Panc1 (cell line): ENCODE measurements at regions of chr3 and their contacts with region 1.

Region 1: GRCh38 chr3:139427283-139427993 is 38.0 kb upstream of the COPB2 start:
- DNase-seq: peak; percentile 54
- ATAC-seq: peak; percentile 94
- H3K4me3 ChIP-seq: no peak overlapping the region
- H3K27ac ChIP-seq: no peak overlapping the region
- H3K4me1 ChIP-seq: no peaks in the 10 kb centered on the region
- H3K27me3 ChIP-seq: no peaks in the 10 kb centered on the region
- CTCF ChIP-seq: peak; percentile 87

Region 2: DNA sequence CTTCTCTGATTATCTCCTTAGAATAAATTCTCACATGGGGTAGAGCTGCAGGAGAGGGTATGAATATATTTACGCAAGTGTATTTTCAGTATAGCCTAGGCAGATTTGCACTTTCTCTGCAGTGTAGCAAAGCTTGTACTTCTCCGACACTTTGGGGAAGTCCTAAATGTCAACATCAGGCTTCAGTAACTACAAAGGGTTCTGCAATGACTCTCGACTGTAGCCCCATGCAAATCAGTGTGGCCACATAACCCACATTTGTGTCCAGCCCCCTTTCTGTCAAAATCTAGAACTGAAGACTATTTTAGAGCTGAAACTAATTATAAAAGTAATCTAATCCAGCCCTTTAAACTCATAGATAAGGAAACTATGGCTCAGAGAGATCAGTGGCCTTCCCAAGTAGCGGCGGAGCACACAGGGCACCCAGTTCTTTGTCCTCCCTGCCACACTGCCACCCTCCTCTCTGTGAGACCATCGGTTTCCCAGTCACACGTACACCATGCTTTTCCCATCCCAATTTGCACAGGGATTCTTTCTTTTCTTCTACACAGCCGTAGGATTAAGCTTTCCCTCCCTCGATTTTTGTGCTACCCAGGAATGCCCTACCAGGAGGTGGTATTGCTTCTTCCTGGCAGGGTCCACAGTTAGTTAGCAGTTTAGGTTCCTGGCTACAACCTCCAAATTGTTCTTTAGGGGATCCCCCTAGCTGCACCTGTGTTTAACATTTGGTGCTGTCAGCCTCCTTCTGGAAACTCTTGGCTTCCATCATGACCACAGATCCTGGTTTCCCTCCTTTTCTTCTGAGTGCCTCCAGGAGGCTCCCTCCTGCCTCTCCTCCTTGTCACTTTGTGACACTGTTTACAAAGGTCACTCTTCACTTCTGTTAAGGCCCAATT is 1056.1 kb before region 1 on chr3:
- CTCF ChIA-PET with region 1: no interaction called
- POLR2A ChIA-PET with region 1: no interaction called
- in situ Hi-C with region 1: no loop called
- intact Hi-C with region 1: no loop called
- DNase-seq: no peak
- ATAC-seq: 0 out of 2 replicates have a peak, but pooled peaks have one; percentile 24
- H3K4me3 ChIP-seq: no peak overlapping the region
- H3K27ac ChIP-seq: no peak overlapping the region
- H3K4me1 ChIP-seq: no peaks in the 10 kb centered on the region
- H3K27me3 ChIP-seq: no peaks in the 10 kb centered on the region; the same call in 1 of the 2 replicates
- CTCF ChIP-seq: no peak

Region 3: GRCh38 chr3:139182143-139182542 is 245.3 kb before region 1 on chr3:
- CTCF ChIA-PET with region 1: no interaction called
- POLR2A ChIA-PET with region 1: no interaction called
- in situ Hi-C with region 1: no loop called
- intact Hi-C with region 1: no loop called
- DNase-seq: no peak
- ATAC-seq: no peak
- H3K4me3 ChIP-seq: no peak overlapping the region
- H3K27ac ChIP-seq: no peak overlapping the region
- H3K4me1 ChIP-seq: no peaks in the 10 kb centered on the region; the same call in 1 of the 2 replicates
- H3K27me3 ChIP-seq: no peaks in the 10 kb centered on the region
- CTCF ChIP-seq: no peak

Region 4: GRCh38 chr3:139218046-139218445 is 209.4 kb before region 1 on chr3:
- CTCF ChIA-PET with region 1: no interaction called
- POLR2A ChIA-PET with region 1: no interaction called
- in situ Hi-C with region 1: no loop called
- intact Hi-C with region 1: no loop called
- DNase-seq: no peak
- ATAC-seq: no peak
- H3K4me3 ChIP-seq: no peak overlapping the region
- H3K27ac ChIP-seq: no peak overlapping the region
- H3K4me1 ChIP-seq: no peaks in the 10 kb centered on the region
- H3K27me3 ChIP-seq: no peaks in the 10 kb centered on the region
- CTCF ChIP-seq: no peak

Region 5: DNA sequence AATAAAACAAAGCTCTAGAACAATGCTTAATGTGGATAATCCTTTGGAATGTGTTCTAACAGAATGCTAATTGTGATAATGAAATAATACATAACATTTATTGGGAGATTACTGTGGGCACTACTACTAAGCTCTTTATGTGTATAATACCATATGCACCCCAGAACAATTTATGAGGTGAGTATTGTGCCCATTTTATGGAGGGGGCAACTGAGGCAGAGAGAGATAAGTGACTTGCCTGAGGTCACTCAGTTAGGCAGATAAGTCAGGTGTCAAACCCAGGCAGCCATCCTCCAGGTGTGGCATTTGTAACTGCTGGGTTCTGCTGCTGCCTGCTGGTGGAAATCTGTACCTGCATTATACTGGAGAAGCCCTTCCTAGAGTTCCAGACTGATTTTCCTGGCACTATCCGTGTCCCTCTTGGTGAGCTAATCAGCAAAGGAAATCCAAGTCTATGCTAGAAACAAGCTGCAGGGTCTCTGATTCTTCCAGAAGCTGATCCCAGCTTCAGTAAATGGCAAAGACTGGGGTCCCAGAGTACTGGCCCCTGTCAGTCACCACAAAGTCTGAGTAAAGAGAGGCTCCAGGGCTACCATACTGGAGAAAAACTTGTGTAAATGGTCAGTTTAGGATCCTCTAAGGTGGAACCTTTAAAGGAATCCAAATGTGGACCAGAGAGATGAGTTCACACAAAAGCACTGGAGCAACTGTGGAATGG is 134.7 kb after region 1 on chr3:
- CTCF ChIA-PET with region 1: interaction called, 13 read pairs
- POLR2A ChIA-PET with region 1: no interaction called
- in situ Hi-C with region 1: no loop called
- intact Hi-C with region 1: loop called (anchors 1 kb)
- DNase-seq: peak; percentile 8
- ATAC-seq: peak; percentile 92
- H3K4me3 ChIP-seq: no peak overlapping the region
- H3K27ac ChIP-seq: no peak overlapping the region
- H3K4me1 ChIP-seq: peaks cover 3% of the 10 kb centered on the region
- H3K27me3 ChIP-seq: no peaks in the 10 kb centered on the region
- CTCF ChIP-seq: peak; percentile 90

Region 6: GRCh38 chr3:139715743-139716360 is 288.4 kb after region 1 on chr3:
- CTCF ChIA-PET with region 1: interaction called, 13 read pairs
- POLR2A ChIA-PET with region 1: no interaction called
- in situ Hi-C with region 1: no loop called
- intact Hi-C with region 1: no loop called
- DNase-seq: no peak
- ATAC-seq: no peak
- H3K4me3 ChIP-seq: no peak overlapping the region
- H3K27ac ChIP-seq: no peak overlapping the region
- H3K4me1 ChIP-seq: no peaks in the 10 kb centered on the region
- H3K27me3 ChIP-seq: peaks cover 5% of the 10 kb centered on the region; the same call in 1 of the 2 replicates
- CTCF ChIP-seq: no peak

Region 7: GRCh38 chr3:139935016-139935865 is 507.8 kb after region 1 on chr3 and contains the start of gene CLSTN2:
- CTCF ChIA-PET with region 1: interaction called, 4 read pairs
- POLR2A ChIA-PET with region 1: no interaction called
- in situ Hi-C with region 1: no loop called
- intact Hi-C with region 1: loop called (anchors 10 kb)
- DNase-seq: no peak
- ATAC-seq: peak; percentile 80
- H3K4me3 ChIP-seq: peak within 1 kb of the TSS; percentile 19 to 29
- H3K27ac ChIP-seq: no peak within 1 kb of the TSS
- H3K4me1 ChIP-seq: peaks cover 6% of the 10 kb centered on the region; the same call in 1 of the 2 replicates
- H3K27me3 ChIP-seq: peaks cover 26% of the 10 kb centered on the region
- CTCF ChIP-seq: no peak
- total RNA-seq, gene CLSTN2: 0.03 TPM

Region 8: DNA sequence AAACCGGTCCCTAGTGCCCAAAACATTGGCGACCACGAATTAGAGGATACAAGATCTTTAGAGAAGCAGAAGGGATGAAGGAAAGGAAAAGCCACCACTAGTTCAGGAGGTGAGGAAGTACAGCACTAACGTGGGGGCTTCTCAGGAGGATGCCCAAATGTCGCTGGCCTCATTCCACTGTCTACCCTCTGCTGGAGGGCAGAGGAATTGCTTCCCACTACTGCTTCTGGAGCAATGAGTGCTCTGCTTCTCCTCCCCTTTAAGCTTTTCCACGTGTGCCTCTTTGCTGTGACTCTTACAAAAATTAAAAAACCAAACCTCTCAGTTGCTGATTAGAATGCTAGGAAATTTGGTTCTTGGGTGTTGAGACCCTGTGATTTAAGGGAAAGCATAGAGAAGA is 788.8 kb after region 1 on chr3:
- CTCF ChIA-PET with region 1: interaction called, 12 read pairs
- POLR2A ChIA-PET with region 1: no interaction called
- in situ Hi-C with region 1: no loop called
- intact Hi-C with region 1: no loop called
- DNase-seq: peak; percentile 20
- ATAC-seq: no peak
- H3K4me3 ChIP-seq: no peak overlapping the region
- H3K27ac ChIP-seq: no peak overlapping the region
- H3K4me1 ChIP-seq: no peaks in the 10 kb centered on the region
- H3K27me3 ChIP-seq: 0 out of 2 replicates have a peak, but pooled peaks cover 3% of the 10 kb centered on the region
- CTCF ChIP-seq: peak; percentile 58

Region 9: GRCh38 chr3:140953028-140953960 is 1525.9 kb after region 1 on chr3:
- CTCF ChIA-PET with region 1: interaction called, 15 read pairs
- POLR2A ChIA-PET with region 1: no interaction called
- in situ Hi-C with region 1: no loop called
- intact Hi-C with region 1: no loop called
- DNase-seq: no peak
- ATAC-seq: peak; percentile 82
- H3K4me3 ChIP-seq: no peak overlapping the region
- H3K27ac ChIP-seq: peak overlapping the region; percentile 15; the same call in 1 of the 2 replicates
- H3K4me1 ChIP-seq: peaks cover 54% of the 10 kb centered on the region
- H3K27me3 ChIP-seq: no peaks in the 10 kb centered on the region
- CTCF ChIP-seq: no peak